Activated CD8-positive, alpha-beta T cell treated with anti-CD3 and anti-CD28 coated beads for 36 hours (primary cell): ENCODE measurements at regions of chr1 and their contacts with region 1.

Region 1: DNA sequence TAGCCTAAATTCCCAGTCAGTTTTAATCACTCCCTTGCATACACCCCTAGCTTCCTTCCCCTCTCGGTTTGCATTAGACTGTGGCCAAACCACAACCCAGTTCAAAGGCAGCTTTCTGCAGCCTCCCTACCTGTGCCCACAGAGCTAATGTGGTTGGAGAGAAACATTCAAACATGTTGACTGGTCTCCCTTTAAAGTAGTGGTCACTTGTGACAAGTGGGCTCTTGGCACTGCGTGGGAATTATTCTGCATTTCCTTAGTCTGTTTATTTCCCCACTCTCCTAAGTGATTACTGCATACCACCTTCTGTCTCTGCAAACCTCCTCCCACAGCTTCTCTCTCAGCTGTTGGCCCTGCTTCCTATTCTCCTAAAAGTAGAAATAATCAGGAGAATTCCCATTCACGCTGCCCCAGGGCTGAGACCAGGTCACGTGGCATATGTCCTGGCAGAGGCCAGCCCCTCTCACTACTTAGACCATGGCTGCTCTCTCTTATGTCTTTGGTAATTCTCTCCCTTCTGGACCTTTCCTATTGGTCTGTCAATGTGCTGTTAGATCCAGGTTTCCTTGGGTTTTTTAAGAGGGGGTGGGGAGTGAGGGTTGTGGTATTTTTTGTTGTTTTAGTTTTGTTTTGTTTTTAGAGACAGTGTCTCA is 38.4 kb upstream of the CD101 start:
- DNase-seq: no peak
- ATAC-seq: peak; percentile 27
- H3K4me3 Mint-ChIP-seq: no peak overlapping the region
- H3K27ac Mint-ChIP-seq: no peak overlapping the region
- H3K4me1 Mint-ChIP-seq: no peaks in the 10 kb centered on the region
- H3K27me3 Mint-ChIP-seq: no peaks in the 10 kb centered on the region
- CTCF ChIP-seq: no peak

Region 2: GRCh38 chr1:116909510-116910378 is 53.4 kb before region 1 on chr1 and contains the start of gene PTGFRN:
- CTCF ChIA-PET with region 1: no interaction called
- POLR2A ChIA-PET with region 1: no interaction called
- intact Hi-C with region 1: loop called (anchors 5 kb)
- DNase-seq: peak; percentile 25
- ATAC-seq: peak; percentile 73
- H3K4me3 Mint-ChIP-seq: peak within 1 kb of the TSS; percentile 72
- H3K27ac Mint-ChIP-seq: peak within 1 kb of the TSS; percentile 13
- H3K4me1 Mint-ChIP-seq: peaks cover 2% of the 10 kb centered on the region
- H3K27me3 Mint-ChIP-seq: peaks cover 2% of the 10 kb centered on the region
- CTCF ChIP-seq: no peak
- total RNA-seq, gene PTGFRN: 7.0 to 8.4 TPM